GM12878 (cell line): ENCODE measurements at regions of chr7 and their contacts with region 1.

Region 1: GRCh38 chr7:39958038-39958437 is 8.0 kb downstream of the CDK13 start:
- DNase-seq: no peak
- ATAC-seq: peak; percentile 53
- H3K4me3 ChIP-seq: peak overlapping the region; percentile 49
- H3K27ac ChIP-seq: no peak overlapping the region
- H3K4me1 ChIP-seq: peaks cover 5% of the 10 kb centered on the region; the same call in 1 of the 2 replicates
- H3K27me3 ChIP-seq: no peaks in the 10 kb centered on the region
- CTCF ChIP-seq: no peak
- EP300 ChIP-seq: 0 out of 4 replicates have a peak, but pooled peaks of 1 of the 2 experiments have one; percentile 28
- POLR2A ChIP-seq: no peak
- RAD21 ChIP-seq: no peak

Region 2: DNA sequence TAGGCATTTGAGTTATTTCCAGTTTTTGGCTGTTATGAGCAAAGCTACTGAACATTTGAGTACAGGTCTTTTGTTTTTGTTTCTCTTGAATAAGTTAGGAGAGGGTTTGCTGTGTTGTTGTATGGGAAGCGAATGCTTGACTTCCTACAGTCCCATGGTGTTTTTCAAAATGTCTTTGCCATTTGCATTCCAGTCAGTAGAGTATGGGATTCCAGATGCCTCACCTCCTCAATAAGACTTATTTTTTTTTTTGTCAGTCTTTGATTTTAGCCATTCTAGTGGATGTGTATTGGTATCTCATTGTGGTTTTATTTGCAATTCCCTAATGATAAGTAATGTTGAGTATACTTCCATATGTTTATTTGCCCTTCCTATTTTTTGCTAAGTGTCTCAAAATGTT is 11.4 kb after region 1 on chr7:
- CTCF ChIA-PET with region 1: interaction called, 18 read pairs
- POLR2A ChIA-PET with region 1: interaction called, 5 read pairs
- RAD21 ChIA-PET with region 1: interaction called, 4 read pairs
- SMC1A ChIA-PET with region 1: interaction called, 52 read pairs
- in situ Hi-C with region 1: no loop called
- intact Hi-C with region 1: no loop called
- DNase-seq: no peak
- ATAC-seq: no peak
- H3K4me3 ChIP-seq: no peak overlapping the region
- H3K27ac ChIP-seq: no peak overlapping the region
- H3K4me1 ChIP-seq: peaks cover 17% of the 10 kb centered on the region
- H3K27me3 ChIP-seq: no peaks in the 10 kb centered on the region
- CTCF ChIP-seq: no peak
- EP300 ChIP-seq: no peak
- POLR2A ChIP-seq: no peak
- RAD21 ChIP-seq: no peak

Region 3: GRCh38 chr7:40057292-40057691 is 99.3 kb after region 1 on chr7:
- CTCF ChIA-PET with region 1: interaction called, 26 read pairs
- POLR2A ChIA-PET with region 1: no interaction called
- RAD21 ChIA-PET with region 1: interaction called, 10 read pairs
- SMC1A ChIA-PET with region 1: interaction called, 17 read pairs
- in situ Hi-C with region 1: no loop called
- intact Hi-C with region 1: no loop called
- DNase-seq: no peak
- ATAC-seq: no peak
- H3K4me3 ChIP-seq: no peak overlapping the region
- H3K27ac ChIP-seq: no peak overlapping the region
- H3K4me1 ChIP-seq: no peaks in the 10 kb centered on the region
- H3K27me3 ChIP-seq: no peaks in the 10 kb centered on the region
- CTCF ChIP-seq: no peak
- EP300 ChIP-seq: no peak
- POLR2A ChIP-seq: no peak
- RAD21 ChIP-seq: no peak